OCI-LY7 (cell line): ENCODE measurements at regions of chr19 and their contacts with region 1.

Region 1: DNA sequence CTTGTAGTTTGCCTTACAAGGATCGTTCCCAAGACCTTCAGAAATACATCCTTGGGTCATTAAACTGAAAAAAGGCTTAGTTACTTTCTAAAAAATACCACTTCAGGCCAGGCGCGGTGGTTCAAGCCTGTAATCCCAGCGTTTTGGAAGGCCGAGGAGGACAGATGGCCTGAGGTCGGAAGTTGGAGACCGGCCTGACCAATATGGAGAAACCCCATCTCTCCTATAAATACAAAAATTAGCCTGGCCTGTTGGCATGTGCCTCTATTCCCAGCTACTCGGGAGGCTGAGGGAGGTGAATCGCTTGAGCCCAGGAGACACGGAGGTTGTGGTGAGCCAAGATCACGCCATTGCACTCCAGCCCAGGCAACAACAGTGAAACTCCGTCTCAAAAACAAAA is 2.2 kb upstream of the ZNF28 start:
- DNase-seq: no peak
- H3K4me3 ChIP-seq: no peak overlapping the region
- H3K27ac ChIP-seq: no peak overlapping the region
- H3K4me1 ChIP-seq: no peaks in the 10 kb centered on the region
- CTCF ChIP-seq: no peak

Region 2: GRCh38 chr19:52778811-52779210 is 44.9 kb before region 1 on chr19:
- CTCF ChIA-PET with region 1: no interaction called
- POLR2A ChIA-PET with region 1: no interaction called
- intact Hi-C with region 1: no loop called
- DNase-seq: no peak
- H3K4me3 ChIP-seq: no peak overlapping the region
- H3K27ac ChIP-seq: no peak overlapping the region
- H3K4me1 ChIP-seq: no peaks in the 10 kb centered on the region
- CTCF ChIP-seq: no peak

Region 3: DNA sequence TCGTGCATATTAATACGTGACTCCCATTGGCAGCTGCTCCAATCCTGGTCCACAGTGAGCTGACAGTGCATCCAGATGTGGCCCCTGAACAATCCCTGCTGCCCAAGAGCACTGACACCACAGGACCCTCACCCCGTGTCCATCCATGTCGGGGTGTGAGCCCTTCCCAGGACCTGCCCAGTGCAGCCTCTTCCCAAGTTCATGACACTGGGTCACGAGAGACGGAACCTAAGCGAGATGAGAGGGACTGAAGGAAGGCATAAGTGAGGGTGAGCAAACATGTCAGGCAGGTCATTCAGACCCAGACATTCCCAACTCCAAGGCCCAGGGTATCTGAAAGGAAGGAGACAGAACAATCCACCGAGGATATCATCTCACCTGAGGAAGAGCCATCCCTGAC is 30.2 kb after region 1 on chr19:
- CTCF ChIA-PET with region 1: no interaction called
- POLR2A ChIA-PET with region 1: no interaction called
- intact Hi-C with region 1: loop called (anchors 5 kb)
- DNase-seq: no peak
- H3K4me3 ChIP-seq: no peak overlapping the region
- H3K27ac ChIP-seq: no peak overlapping the region
- H3K4me1 ChIP-seq: peaks cover 3% of the 10 kb centered on the region
- CTCF ChIP-seq: no peak

Region 4: DNA sequence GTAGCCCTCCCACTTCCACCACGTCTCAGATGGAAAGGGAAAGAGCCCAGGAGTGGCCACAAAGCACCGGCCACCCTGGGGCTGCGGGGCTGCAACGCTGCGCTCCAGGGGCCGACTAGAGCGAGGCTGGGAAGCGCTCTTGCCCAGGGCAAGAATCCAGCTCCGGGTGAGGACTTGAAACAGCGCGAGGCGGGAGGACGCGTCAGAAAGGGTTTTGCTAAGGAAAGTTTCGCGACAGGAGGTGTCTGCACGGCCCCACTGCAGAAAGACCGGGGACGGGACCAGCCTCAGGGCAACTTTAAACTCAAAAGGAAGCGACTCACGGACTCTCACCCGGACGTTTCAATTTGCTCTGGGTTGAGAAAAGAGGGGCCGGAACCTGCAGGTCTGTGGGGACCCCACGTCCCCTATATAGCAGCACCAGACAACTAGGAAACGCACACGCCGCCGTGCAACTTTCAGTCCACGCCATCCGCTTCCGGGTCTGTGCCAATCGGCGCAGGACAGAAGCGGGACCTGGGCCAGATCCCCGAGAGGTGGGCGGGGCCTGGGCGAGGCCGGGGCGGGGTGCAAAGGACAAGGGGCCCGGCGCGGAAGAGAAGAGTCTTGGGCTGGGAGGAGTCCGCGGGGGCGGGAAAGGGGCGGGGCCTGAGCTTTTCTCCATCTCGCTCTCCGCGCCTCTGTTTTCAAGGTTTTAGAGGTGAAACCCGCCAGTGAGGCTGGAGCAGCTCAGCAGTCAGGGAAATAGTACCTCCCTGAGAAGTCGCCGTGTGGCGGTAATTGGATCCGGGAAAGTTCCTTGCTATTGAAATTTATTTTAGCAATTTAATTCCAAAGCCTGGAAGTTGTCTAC is 138.9 kb after region 1 on chr19 and contains the start of gene ZNF816:
- CTCF ChIA-PET with region 1: no interaction called
- POLR2A ChIA-PET with region 1: no interaction called
- intact Hi-C with region 1: no loop called
- DNase-seq: peak; percentile 97
- H3K4me3 ChIP-seq: peak within 1 kb of the TSS; percentile 81
- H3K27ac ChIP-seq: peak within 1 kb of the TSS; percentile 40
- H3K4me1 ChIP-seq: peaks cover 17% of the 10 kb centered on the region
- CTCF ChIP-seq: no peak
- total RNA-seq, gene ZNF816: 5.8 and 8.8 TPM in 2 replicates